ENCODE measurements at regions of chr9 and their contacts with region 1.

Region 1: GRCh38 chr9:69346998-69347397 is 22.0 kb downstream of the ENTREP1 start:
- DNase-seq: no peak
- H3K4me3 ChIP-seq: no peak overlapping the region
- H3K27ac ChIP-seq: no peak overlapping the region
- H3K4me1 ChIP-seq: no peaks in the 10 kb centered on the region
- H3K27me3 ChIP-seq: peaks cover 9% of the 10 kb centered on the region
- CTCF ChIP-seq: no peak

Region 2: GRCh38 chr9:69400454-69400853 is 53.5 kb after region 1 on chr9:
- CTCF ChIA-PET with region 1: no interaction called
- POLR2A ChIA-PET with region 1: no interaction called
- intact Hi-C with region 1: loop called (anchors 10 kb)
- DNase-seq: no peak
- H3K4me3 ChIP-seq: no peak overlapping the region
- H3K27ac ChIP-seq: no peak overlapping the region
- H3K4me1 ChIP-seq: no peaks in the 10 kb centered on the region
- H3K27me3 ChIP-seq: no peaks in the 10 kb centered on the region
- CTCF ChIP-seq: no peak

Region 3: DNA sequence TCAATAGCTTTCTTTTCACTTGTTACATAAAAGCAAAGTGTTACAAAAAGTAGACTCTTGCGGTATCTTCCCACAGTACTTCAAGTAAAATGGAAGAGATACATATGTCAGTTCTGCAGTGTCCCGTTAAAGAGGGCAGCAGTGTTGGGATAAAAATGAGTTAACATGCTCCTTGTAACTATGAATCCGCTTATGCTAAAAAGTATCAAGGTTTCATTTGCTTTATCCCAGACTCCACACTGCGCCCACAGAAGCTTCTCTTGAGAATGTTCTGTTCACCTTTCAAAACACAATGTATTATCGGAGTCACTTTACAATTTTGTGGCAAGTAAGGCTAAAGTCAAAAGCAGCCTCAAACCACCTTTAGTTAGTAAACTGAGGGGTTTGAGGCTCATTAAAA is 412.0 kb after region 1 on chr9:
- CTCF ChIA-PET with region 1: no interaction called
- POLR2A ChIA-PET with region 1: no interaction called
- intact Hi-C with region 1: no loop called
- DNase-seq: peak; percentile 27
- H3K4me3 ChIP-seq: peak overlapping the region; percentile 63
- H3K27ac ChIP-seq: peak overlapping the region; percentile 94
- H3K4me1 ChIP-seq: peaks cover 12% of the 10 kb centered on the region
- H3K27me3 ChIP-seq: no peaks in the 10 kb centered on the region
- CTCF ChIP-seq: no peak

Region 4: GRCh38 chr9:70614786-70615463 is 1267.9 kb after region 1 on chr9:
- CTCF ChIA-PET with region 1: no interaction called
- POLR2A ChIA-PET with region 1: no interaction called
- intact Hi-C with region 1: no loop called
- DNase-seq: no peak
- H3K4me3 ChIP-seq: no peak overlapping the region
- H3K27ac ChIP-seq: no peak overlapping the region
- H3K4me1 ChIP-seq: peaks cover 2% of the 10 kb centered on the region
- H3K27me3 ChIP-seq: no peaks in the 10 kb centered on the region
- CTCF ChIP-seq: no peak